ENCODE measurements at regions of chr1 and their contacts with region 1.

Region 1: DNA sequence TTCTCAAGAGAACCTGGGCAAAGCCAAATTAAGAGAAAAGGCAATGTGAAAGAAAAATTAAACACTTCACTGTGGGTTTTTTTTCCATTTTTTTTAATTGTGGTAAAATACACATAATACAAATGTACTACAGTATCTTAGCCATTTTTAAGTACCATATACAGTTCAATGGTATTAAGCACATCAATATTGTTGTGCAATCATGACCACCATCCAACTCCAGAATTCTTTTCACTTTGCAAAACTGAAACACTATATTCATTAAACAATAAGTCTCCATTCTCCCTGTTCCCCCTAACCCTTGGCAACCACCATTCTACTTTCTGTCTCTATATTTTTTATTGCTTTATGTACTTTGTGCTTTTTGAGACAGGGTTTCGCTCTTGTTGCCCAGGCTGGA is 17.8 kb upstream of the OTUD7B start:
- DNase-seq: no peak
- H3K4me3 ChIP-seq: no peak overlapping the region
- H3K27ac ChIP-seq: no peak overlapping the region
- H3K4me1 ChIP-seq: no peaks in the 10 kb centered on the region
- H3K27me3 ChIP-seq: no peaks in the 10 kb centered on the region
- CTCF ChIP-seq: no peak
- POLR2A ChIP-seq: no peak

Region 2: DNA sequence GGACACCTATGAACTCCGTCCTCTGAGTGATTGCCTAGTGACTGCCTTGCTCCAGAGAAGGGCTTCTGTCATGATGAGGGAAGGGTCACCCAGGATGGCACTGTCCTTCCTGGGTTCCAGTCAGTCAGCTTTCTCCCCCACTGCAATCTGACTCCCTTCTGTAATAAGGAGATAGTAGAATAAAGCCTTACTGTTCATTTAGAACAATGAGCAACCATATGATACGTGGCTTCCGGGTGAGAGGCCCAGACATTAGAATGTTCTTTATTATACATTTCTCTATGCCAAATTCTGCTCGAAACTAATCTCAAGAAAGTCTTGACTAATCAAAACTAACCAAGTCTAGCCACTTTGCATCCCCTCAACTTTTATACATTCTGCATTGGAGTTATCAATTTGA is 83.1 kb before region 1 on chr1:
- intact Hi-C with region 1: no loop called
- DNase-seq: no peak
- H3K4me3 ChIP-seq: no peak overlapping the region
- H3K27ac ChIP-seq: no peak overlapping the region
- H3K4me1 ChIP-seq: no peaks in the 10 kb centered on the region
- H3K27me3 ChIP-seq: no peaks in the 10 kb centered on the region
- CTCF ChIP-seq: no peak
- POLR2A ChIP-seq: no peak

Region 3: DNA sequence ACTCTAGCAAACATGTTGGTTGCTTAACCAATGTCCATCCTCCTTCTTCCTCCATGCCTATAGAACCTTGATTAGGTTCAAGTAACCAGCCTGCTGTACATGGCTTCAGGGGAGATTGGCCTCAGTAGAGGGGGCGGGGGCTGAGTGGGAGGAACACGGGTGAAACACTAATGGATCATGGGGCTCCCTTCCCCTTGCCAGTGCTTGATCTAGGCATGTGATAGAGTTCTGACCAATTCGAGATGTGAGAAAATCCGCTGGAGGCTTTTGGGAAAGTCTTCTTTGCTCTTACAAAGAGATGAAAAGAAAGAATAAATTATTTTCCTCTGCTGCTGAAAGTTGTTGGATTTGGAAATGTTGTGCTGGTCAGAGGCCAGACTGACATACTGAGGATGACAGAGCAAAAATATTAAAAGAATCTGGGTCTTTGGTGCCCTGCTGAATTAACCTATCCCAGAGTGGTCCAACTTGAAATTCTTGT is 12.6 kb before region 1 on chr1:
- intact Hi-C with region 1: loop called (anchors 2 kb)
- DNase-seq: no peak
- H3K4me3 ChIP-seq: no peak overlapping the region
- H3K27ac ChIP-seq: no peak overlapping the region
- H3K4me1 ChIP-seq: peaks cover 5% of the 10 kb centered on the region
- H3K27me3 ChIP-seq: no peaks in the 10 kb centered on the region
- CTCF ChIP-seq: no peak
- POLR2A ChIP-seq: no peak

Region 4: DNA sequence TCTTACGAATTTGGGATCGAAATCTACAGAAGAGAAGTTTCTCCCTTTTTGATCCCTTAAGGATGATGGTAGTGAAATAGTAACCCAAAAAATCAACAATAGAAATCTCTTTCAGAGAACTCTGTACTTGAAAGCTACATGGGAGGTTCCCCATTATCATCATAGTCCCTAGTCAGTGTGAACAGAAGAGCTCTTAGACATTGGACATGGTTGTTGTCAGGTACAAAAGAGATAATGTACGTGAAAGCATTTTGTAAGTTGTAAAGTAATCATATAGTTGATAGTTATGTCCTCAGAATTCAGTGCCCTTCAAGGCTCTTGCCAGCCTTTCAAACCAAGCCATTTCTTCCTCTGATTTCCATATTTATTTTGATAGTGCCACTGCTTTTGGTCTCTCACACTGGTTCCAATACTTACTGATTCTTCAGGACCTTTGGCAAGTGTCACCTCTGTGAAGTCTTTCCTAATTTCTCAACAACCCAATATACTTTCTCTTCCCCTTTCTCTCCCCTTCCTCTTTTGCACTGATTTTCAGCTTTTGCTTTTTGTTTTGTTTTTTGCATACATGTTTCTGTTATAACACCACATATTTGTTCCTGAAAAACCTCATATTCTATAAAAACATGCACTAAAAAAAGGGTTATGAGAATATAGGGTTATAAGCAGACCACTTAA is 61.7 kb after region 1 on chr1:
- intact Hi-C with region 1: no loop called
- DNase-seq: no peak
- H3K4me3 ChIP-seq: no peak overlapping the region
- H3K27ac ChIP-seq: no peak overlapping the region
- H3K4me1 ChIP-seq: no peaks in the 10 kb centered on the region
- H3K27me3 ChIP-seq: no peaks in the 10 kb centered on the region
- CTCF ChIP-seq: no peak
- POLR2A ChIP-seq: no peak

Region 5: GRCh38 chr1:150102986-150103385 is 74.7 kb after region 1 on chr1:
- intact Hi-C with region 1: no loop called
- DNase-seq: no peak
- H3K4me3 ChIP-seq: no peak overlapping the region
- H3K27ac ChIP-seq: no peak overlapping the region
- H3K4me1 ChIP-seq: no peaks in the 10 kb centered on the region
- H3K27me3 ChIP-seq: no peaks in the 10 kb centered on the region
- CTCF ChIP-seq: no peak
- POLR2A ChIP-seq: no peak

Measured in prostate gland (tissue), 2 donors.